Caco-2 (cell line): ENCODE measurements at regions of chr20 and their contacts with region 1.

Region 1: DNA sequence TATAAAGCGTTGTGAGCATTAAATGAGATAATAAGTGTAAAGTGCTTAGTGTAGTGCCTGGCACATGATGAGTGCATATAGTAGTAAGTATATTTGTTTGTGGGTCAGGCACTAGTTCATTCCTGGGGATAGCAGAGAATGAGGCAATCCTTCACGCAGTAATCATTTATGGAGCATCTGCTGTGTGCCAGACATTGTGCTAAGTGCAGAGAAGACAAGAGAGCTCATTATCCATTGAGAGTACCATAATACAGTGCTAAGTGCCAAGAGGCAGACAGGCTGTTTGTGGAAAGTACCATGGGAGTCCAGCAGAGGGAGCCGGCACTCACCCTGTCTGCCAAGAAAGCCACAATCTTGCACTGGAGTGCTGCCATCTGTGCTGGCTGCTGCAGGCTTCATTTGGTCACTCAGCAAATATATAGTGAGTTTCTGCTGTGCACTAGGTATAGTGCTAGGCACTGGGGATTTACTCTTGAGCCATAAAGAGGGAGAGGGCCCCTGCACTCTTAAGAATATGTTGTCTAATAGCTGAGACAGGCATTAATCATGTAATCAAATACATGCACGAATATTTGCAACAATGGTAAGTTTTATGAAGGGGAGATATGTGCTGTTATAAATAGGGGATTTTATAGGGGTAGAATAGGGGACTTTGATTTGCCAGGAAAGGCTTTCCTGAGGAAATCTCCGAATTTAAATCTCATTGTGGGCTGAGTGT is 12.9 kb upstream of the MROH8 start:
- DNase-seq: peak; percentile 87 to 91
- H3K4me3 ChIP-seq: no peak overlapping the region
- H3K4me3 Mint-ChIP-seq: no peak overlapping the region
- H3K27ac Mint-ChIP-seq: peak overlapping the region; percentile 16
- H3K4me1 ChIP-seq: no peaks in the 10 kb centered on the region
- H3K4me1 Mint-ChIP-seq: peaks cover 38% of the 10 kb centered on the region
- H3K27me3 ChIP-seq: no peaks in the 10 kb centered on the region
- H3K27me3 Mint-ChIP-seq: no peaks in the 10 kb centered on the region
- CTCF ChIP-seq: peak; percentile 98 to 99

Region 2: DNA sequence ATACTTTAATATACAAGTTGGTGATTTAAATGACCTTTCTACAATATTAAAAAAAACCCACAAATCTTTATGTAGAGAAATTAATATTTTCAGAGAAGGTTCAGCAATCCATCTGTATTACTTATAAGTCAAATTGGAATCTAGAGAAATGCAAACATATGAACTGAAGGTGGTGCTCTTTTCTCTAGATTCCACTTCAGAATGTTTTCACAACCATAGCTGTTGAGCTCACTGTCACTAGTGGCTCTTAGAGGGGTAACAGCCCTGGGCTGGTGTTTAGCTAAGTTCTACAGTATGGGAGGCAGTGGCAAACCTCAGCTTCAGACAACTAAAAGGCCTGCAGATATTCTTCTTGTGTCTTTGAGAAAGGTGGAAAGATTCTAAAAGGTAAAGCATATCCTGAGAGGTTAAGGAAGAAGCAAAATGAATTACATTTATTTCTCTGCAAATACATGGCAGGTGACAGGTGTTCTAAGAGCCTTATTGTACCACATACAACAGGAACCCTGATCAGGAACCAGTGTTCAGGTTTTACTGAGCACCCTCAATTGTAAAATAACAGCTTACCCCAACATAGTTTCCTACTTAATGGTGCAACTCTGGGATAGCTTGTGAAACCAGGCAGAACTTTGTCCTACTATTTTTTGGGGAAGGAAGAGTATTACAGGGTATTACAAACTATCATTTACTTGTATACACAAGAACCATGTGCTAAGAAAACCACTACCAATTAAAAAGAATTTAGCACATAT is 184.2 kb before region 1 on chr20:
- CTCF ChIA-PET with region 1: interaction called, 18 read pairs
- POLR2A ChIA-PET with region 1: no interaction called
- intact Hi-C with region 1: no loop called
- DNase-seq: peak; percentile 42
- H3K4me3 ChIP-seq: no peak overlapping the region
- H3K4me3 Mint-ChIP-seq: no peak overlapping the region
- H3K27ac Mint-ChIP-seq: no peak overlapping the region
- H3K4me1 ChIP-seq: no peaks in the 10 kb centered on the region
- H3K4me1 Mint-ChIP-seq: no peaks in the 10 kb centered on the region
- H3K27me3 ChIP-seq: no peaks in the 10 kb centered on the region
- H3K27me3 Mint-ChIP-seq: no peaks in the 10 kb centered on the region
- CTCF ChIP-seq: peak; percentile 29 to 42

Region 3: DNA sequence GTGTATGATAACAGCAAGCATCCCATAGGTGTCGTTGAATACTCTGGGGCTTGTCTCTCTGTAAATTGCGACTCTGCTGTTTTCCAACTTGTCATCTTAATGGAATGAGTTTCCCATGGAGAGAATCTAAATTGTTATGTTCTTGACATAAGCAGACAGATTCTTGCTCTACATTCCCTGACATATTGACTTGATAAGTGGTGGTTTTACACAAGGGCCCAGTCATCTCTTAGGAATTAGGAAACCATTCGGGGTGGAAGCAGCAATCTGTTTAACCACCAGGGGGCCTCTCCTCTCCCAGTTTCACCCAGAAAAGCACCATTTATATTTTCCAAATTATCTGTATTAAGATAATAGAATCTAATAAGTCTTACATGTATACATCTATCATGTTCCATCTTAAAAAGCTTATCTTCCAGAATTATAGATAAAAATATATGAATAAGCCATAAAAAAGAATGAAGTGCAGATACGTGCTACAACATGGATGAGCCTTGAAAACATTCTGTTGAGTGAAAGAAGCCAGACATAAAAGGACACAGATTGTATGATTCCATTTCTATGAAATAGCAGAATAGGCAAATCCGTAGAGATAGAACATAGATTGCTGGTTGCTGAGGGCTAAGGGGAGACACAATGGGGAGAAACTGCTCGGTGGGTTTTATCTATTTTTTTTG is 10.1 kb after region 1 on chr20:
- CTCF ChIA-PET with region 1: interaction called, 17 read pairs
- POLR2A ChIA-PET with region 1: no interaction called
- intact Hi-C with region 1: no loop called
- DNase-seq: peak; percentile 74 to 82
- H3K4me3 ChIP-seq: no peak overlapping the region
- H3K4me3 Mint-ChIP-seq: no peak overlapping the region
- H3K27ac Mint-ChIP-seq: no peak overlapping the region
- H3K4me1 ChIP-seq: peaks cover 9% of the 10 kb centered on the region
- H3K4me1 Mint-ChIP-seq: peaks cover 16% of the 10 kb centered on the region
- H3K27me3 ChIP-seq: no peaks in the 10 kb centered on the region
- H3K27me3 Mint-ChIP-seq: no peaks in the 10 kb centered on the region
- CTCF ChIP-seq: peak; percentile 96 to 99

Region 4: GRCh38 chr20:37220731-37221130 is 28.4 kb after region 1 on chr20:
- CTCF ChIA-PET with region 1: interaction called, 17 read pairs
- POLR2A ChIA-PET with region 1: no interaction called
- intact Hi-C with region 1: no loop called
- DNase-seq: peak in 1 of 2 experiments; percentile 68
- H3K4me3 ChIP-seq: no peak overlapping the region
- H3K4me3 Mint-ChIP-seq: no peak overlapping the region
- H3K27ac Mint-ChIP-seq: peak overlapping the region; percentile 40
- H3K4me1 ChIP-seq: no peaks in the 10 kb centered on the region
- H3K4me1 Mint-ChIP-seq: peaks cover 16% of the 10 kb centered on the region
- H3K27me3 ChIP-seq: no peaks in the 10 kb centered on the region
- H3K27me3 Mint-ChIP-seq: no peaks in the 10 kb centered on the region
- CTCF ChIP-seq: no peak

Region 5: DNA sequence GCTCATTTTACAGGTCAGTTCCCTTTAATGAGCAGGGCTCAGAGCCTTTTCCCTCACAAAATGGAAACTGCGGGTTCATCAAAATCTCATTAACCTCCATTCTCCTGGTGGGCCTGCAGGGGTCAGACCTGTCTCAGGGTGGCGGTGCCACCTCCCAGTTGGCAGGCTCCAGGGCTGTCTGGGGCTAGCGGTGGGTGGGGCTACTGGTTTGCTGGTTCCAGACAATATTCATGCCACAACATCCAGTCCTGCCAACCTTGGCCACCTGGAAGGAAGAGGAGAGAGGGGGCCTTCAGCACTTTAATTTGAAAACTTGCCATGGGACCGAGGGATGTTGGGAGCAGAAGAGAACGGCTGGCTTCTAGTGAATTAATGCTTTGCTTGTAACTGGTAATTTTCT is 459.6 kb after region 1 on chr20:
- CTCF ChIA-PET with region 1: no interaction called
- POLR2A ChIA-PET with region 1: no interaction called
- intact Hi-C with region 1: no loop called
- DNase-seq: peak in 1 of 2 experiments; percentile 59
- H3K4me3 ChIP-seq: no peak overlapping the region
- H3K4me3 Mint-ChIP-seq: no peak overlapping the region
- H3K27ac Mint-ChIP-seq: no peak overlapping the region
- H3K4me1 ChIP-seq: peaks cover 7% of the 10 kb centered on the region
- H3K4me1 Mint-ChIP-seq: peaks cover 17% of the 10 kb centered on the region
- H3K27me3 ChIP-seq: no peaks in the 10 kb centered on the region
- H3K27me3 Mint-ChIP-seq: peaks cover 3% of the 10 kb centered on the region
- CTCF ChIP-seq: peak; percentile 63 to 73